HCT116 (cell line): ENCODE measurements at regions of chr17 and their contacts with region 1.

Region 1: DNA sequence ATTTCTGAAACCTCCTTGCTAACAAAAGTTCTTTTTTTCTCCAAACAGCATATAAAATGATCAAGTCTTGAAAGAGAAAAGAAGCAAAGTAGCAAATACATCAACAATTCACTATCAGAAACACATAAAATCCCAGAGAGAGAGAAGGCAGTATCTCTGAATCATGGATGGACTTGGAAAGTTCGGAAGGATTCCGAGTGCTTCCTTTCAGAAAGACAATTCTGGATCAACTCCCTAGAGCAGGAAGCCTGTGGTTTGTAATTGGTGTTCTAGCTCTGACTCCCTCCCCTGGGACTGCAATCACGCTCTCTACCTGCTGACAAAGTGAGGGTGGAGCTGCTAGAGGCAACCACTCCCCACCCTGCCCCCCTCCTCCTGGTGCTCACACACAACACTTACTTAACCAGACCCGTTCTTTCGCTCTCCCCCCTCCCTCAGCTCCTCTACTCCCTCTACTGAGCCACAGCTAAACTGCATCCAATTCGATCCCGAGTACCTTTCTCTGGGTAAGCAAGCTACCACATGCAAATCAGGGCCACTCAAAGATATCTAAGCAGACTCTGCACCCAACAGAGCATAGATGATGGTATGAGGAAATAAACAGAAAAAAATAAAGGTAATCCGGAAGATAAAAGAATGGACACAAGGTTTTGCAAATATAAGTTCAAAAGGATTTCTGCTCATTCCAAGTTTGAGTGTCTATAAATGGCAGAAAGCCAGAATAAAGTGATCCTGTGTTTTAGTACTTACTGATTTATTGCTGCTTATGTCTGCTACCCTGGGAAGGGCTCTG is at the start of gene RNF43:
- DNase-seq: peak; percentile 100
- ATAC-seq: peak; percentile 93
- H3K4me3 ChIP-seq: peak within 1 kb of the TSS; percentile 66 to 68
- H3K27ac ChIP-seq: peak within 1 kb of the TSS; percentile 78
- H3K4me1 ChIP-seq: peaks cover 56 to 69% of the 10 kb centered on the region in 2 experiments
- H3K27me3 ChIP-seq: no peaks in the 10 kb centered on the region
- CTCF ChIP-seq: peak; percentile 70 to 92 (median 89); a peak in 5 of 6 replicates
- POLR2A ChIP-seq: no peak
- RAD21 ChIP-seq: peak; percentile 92
- total RNA-seq, gene RNF43: 42.2 TPM

Region 2: DNA sequence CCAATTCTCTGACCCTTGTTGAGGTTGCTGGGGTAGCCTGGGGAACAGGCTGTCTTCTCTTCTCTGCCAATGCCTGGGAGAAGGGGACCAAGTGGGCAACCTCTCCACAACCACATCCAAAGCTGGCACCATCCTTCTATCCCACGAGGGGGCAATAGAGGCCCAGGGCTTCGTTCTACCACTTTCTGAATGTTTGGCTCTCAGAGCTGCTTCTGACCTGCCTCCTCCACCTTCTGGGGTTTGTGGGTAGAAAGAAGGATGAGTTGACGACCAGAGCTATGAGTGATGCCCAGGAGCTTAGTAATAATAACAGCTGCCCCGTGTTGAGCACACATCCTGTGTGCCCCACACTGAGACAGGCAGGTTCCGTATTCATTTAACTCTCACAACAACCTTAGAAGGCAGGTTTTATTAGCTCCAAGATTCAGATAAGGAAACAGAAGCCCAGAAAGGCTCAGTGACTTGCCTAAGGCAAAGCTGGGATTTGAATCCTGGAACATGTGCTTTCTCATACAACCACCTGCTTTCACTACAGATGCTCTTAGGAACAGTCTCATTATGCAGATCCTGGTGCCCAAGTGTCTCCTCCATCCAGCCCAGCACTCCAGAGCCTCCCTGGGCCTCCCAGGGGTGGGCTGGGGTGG is 100.0 kb before region 1 on chr17:
- CTCF ChIA-PET with region 1: interaction called, 33 read pairs
- POLR2A ChIA-PET with region 1: interaction called, 8 read pairs
- RAD21 ChIA-PET with region 1: interaction called, 6 to 25 read pairs
- intact Hi-C with region 1: loop called (anchors 1 kb)
- DNase-seq: peak; percentile 72
- ATAC-seq: peak; percentile 95
- H3K4me3 ChIP-seq: no peak overlapping the region
- H3K27ac ChIP-seq: peak overlapping the region; percentile 30; the same call in 1 of the 2 replicates
- H3K4me1 ChIP-seq: peaks cover 8 to 17% of the 10 kb centered on the region in 2 experiments; a peak in 3 of 4 replicates
- H3K27me3 ChIP-seq: no peaks in the 10 kb centered on the region
- CTCF ChIP-seq: peak; percentile 97 to 99 (median 99)
- POLR2A ChIP-seq: no peak
- RAD21 ChIP-seq: peak; percentile 100

Region 3: GRCh38 chr17:58352014-58352842 is 65.3 kb before region 1 on chr17 and contains the start of gene SUPT4H1:
- CTCF ChIA-PET with region 1: interaction called, 20 read pairs
- POLR2A ChIA-PET with region 1: interaction called, 39 read pairs
- RAD21 ChIA-PET with region 1: interaction called, 13 to 16 read pairs
- intact Hi-C with region 1: loop called (anchors 1 kb)
- DNase-seq: peak; percentile 94
- ATAC-seq: peak; percentile 93
- H3K4me3 ChIP-seq: peak within 1 kb of the TSS; percentile 79 to 82
- H3K27ac ChIP-seq: peak within 1 kb of the TSS; percentile 73
- H3K4me1 ChIP-seq: peaks cover 16 to 22% of the 10 kb centered on the region in 2 experiments
- H3K27me3 ChIP-seq: no peaks in the 10 kb centered on the region
- CTCF ChIP-seq: no peak
- POLR2A ChIP-seq: peak; percentile 90
- RAD21 ChIP-seq: peak; percentile 38
- total RNA-seq, gene SUPT4H1: 118 TPM

Region 4: GRCh38 chr17:58382108-58382871 is 35.2 kb before region 1 on chr17:
- CTCF ChIA-PET with region 1: interaction called, 6 read pairs
- POLR2A ChIA-PET with region 1: interaction called, 17 read pairs
- RAD21 ChIA-PET with region 1: no interaction called
- intact Hi-C with region 1: no loop called
- DNase-seq: no peak
- ATAC-seq: no peak
- H3K4me3 ChIP-seq: no peak overlapping the region
- H3K27ac ChIP-seq: no peak overlapping the region
- H3K4me1 ChIP-seq: peaks cover 87 to 99% of the 10 kb centered on the region in 2 experiments
- H3K27me3 ChIP-seq: no peaks in the 10 kb centered on the region
- CTCF ChIP-seq: no peak
- POLR2A ChIP-seq: no peak
- RAD21 ChIP-seq: no peak

Region 5: GRCh38 chr17:58402047-58402446 is 15.4 kb before region 1 on chr17:
- CTCF ChIA-PET with region 1: interaction called, 6 read pairs
- POLR2A ChIA-PET with region 1: interaction called, 16 read pairs
- RAD21 ChIA-PET with region 1: no interaction called
- intact Hi-C with region 1: no loop called
- DNase-seq: peak; percentile 85
- ATAC-seq: peak; percentile 77
- H3K4me3 ChIP-seq: peak overlapping the region in 1 of 2 experiments; percentile 7; a peak in 2 of 4 replicates
- H3K27ac ChIP-seq: peak overlapping the region; percentile 66
- H3K4me1 ChIP-seq: peaks cover 88 to 97% of the 10 kb centered on the region in 2 experiments
- H3K27me3 ChIP-seq: no peaks in the 10 kb centered on the region
- CTCF ChIP-seq: no peak
- POLR2A ChIP-seq: no peak
- RAD21 ChIP-seq: no peak

Region 6: GRCh38 chr17:58432806-58433572 is 15.5 kb after region 1 on chr17:
- CTCF ChIA-PET with region 1: interaction called, 29 read pairs
- POLR2A ChIA-PET with region 1: interaction called, 54 read pairs
- RAD21 ChIA-PET with region 1: interaction called in 1 of 2 experiments, 3 read pairs
- intact Hi-C with region 1: no loop called
- DNase-seq: no peak
- ATAC-seq: peak; percentile 73
- H3K4me3 ChIP-seq: no peak overlapping the region
- H3K27ac ChIP-seq: no peak overlapping the region
- H3K4me1 ChIP-seq: peaks cover 11 to 13% of the 10 kb centered on the region in 2 experiments
- H3K27me3 ChIP-seq: no peaks in the 10 kb centered on the region
- CTCF ChIP-seq: peak; percentile 48 to 67 (median 61)
- POLR2A ChIP-seq: no peak
- RAD21 ChIP-seq: peak; percentile 75

Region 7: GRCh38 chr17:58476812-58477211 is 59.3 kb after region 1 on chr17:
- CTCF ChIA-PET with region 1: no interaction called
- POLR2A ChIA-PET with region 1: no interaction called
- RAD21 ChIA-PET with region 1: no interaction called
- intact Hi-C with region 1: no loop called
- DNase-seq: no peak
- ATAC-seq: no peak
- H3K4me3 ChIP-seq: no peak overlapping the region
- H3K27ac ChIP-seq: no peak overlapping the region
- H3K4me1 ChIP-seq: no peaks in the 10 kb centered on the region
- H3K27me3 ChIP-seq: 0 out of 2 replicates have a peak, but pooled peaks cover 3% of the 10 kb centered on the region
- CTCF ChIP-seq: no peak
- POLR2A ChIP-seq: no peak
- RAD21 ChIP-seq: no peak